ENCODE measurements at regions of chr3 and their contacts with region 1.

Region 1: DNA sequence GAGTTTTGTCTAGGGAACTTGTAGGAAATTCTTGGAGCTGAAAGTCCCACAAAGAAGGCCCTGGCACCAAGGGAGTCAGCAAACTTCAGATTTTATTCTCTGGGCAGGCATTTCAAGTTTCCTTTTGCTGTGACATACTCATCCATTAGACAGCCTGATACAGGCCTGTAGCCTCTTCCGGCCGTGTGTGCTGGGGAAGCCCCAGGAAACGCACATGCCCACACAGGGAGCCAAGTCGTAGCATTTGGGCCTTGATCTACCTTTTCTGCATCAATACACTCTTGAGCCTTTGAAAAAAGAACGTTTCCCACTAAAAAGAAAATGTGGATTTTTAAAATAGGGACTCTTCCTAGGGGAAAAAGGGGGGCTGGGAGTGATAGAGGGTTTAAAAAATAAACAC is 15.0 kb downstream of the TIGIT start:
- DNase-seq: peak; percentile 79
- H3K4me3 Mint-ChIP-seq: peak overlapping the region; percentile 49
- H3K27ac Mint-ChIP-seq: peak overlapping the region; percentile 92
- H3K4me1 Mint-ChIP-seq: peaks cover 33% of the 10 kb centered on the region
- H3K27me3 Mint-ChIP-seq: no peaks in the 10 kb centered on the region

Region 2: GRCh38 chr3:114319453-114319852 is 10.6 kb after region 1 on chr3:
- intact Hi-C with region 1: loop called (anchors 1 kb)
- DNase-seq: no peak
- H3K4me3 Mint-ChIP-seq: no peak overlapping the region
- H3K27ac Mint-ChIP-seq: no peak overlapping the region
- H3K4me1 Mint-ChIP-seq: peaks cover 44% of the 10 kb centered on the region
- H3K27me3 Mint-ChIP-seq: no peaks in the 10 kb centered on the region

Measured in activated CD4-positive, alpha-beta T cell treated with anti-CD3 and anti-CD28 coated beads, Interleukin-2, amount 10 ng/mL, durations not matched to agents 24 days and 14 days (primary cell).